ENCODE measurements at regions of chr1 and their contacts with region 1.

Region 1: GRCh38 chr1:16960560-16961296 is 19.7 kb downstream of the MFAP2 start:
- DNase-seq: peak; percentile 90
- H3K4me3 Mint-ChIP-seq: peak overlapping the region; percentile 74
- H3K27ac Mint-ChIP-seq: no peak overlapping the region
- H3K4me1 Mint-ChIP-seq: peaks cover 8% of the 10 kb centered on the region
- H3K27me3 Mint-ChIP-seq: no peaks in the 10 kb centered on the region

Region 2: GRCh38 chr1:16913833-16914662 is 46.7 kb before region 1 on chr1:
- CTCF ChIA-PET with region 1: interaction called, 3 read pairs
- intact Hi-C with region 1: loop called (anchors 2 kb)
- DNase-seq: peak; percentile 92
- H3K4me3 Mint-ChIP-seq: peak overlapping the region; percentile 88
- H3K27ac Mint-ChIP-seq: peak overlapping the region; percentile 77
- H3K4me1 Mint-ChIP-seq: peaks cover 30% of the 10 kb centered on the region
- H3K27me3 Mint-ChIP-seq: no peaks in the 10 kb centered on the region

Region 3: GRCh38 chr1:16921391-16922185 is 39.1 kb before region 1 on chr1 and contains the start of gene CROCC:
- CTCF ChIA-PET with region 1: interaction called, 11 read pairs
- intact Hi-C with region 1: no loop called
- DNase-seq: peak; percentile 76
- H3K4me3 Mint-ChIP-seq: peak within 1 kb of the TSS; percentile 65
- H3K27ac Mint-ChIP-seq: no peak within 1 kb of the TSS
- H3K4me1 Mint-ChIP-seq: peaks cover 18% of the 10 kb centered on the region
- H3K27me3 Mint-ChIP-seq: no peaks in the 10 kb centered on the region
- total RNA-seq, gene CROCC: 15.5 to 15.7 TPM

Region 4: DNA sequence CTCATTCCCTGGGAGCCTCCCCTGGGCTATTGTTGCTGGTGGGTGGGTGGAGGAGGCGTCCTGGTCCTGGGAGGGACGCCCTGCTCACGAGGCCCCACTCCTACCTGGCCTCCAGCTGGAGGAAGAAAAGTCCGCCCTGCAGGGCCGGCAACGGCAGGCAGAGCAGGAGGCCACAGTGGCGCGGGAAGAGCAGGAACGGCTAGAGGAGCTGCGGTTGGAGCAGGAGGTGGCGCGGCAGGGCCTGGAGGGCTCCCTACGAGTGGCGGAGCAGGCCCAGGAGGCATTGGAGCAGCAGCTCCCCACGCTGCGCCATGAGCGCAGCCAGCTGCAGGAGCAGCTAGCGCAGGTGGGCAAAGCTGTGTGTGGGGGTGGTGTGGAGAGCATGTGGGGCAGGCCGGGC is 14.1 kb before region 1 on chr1:
- CTCF ChIA-PET with region 1: interaction called, 22 read pairs
- intact Hi-C with region 1: no loop called
- DNase-seq: no peak
- H3K4me3 Mint-ChIP-seq: no peak overlapping the region
- H3K27ac Mint-ChIP-seq: no peak overlapping the region
- H3K4me1 Mint-ChIP-seq: no peaks in the 10 kb centered on the region
- H3K27me3 Mint-ChIP-seq: no peaks in the 10 kb centered on the region

Region 5: DNA sequence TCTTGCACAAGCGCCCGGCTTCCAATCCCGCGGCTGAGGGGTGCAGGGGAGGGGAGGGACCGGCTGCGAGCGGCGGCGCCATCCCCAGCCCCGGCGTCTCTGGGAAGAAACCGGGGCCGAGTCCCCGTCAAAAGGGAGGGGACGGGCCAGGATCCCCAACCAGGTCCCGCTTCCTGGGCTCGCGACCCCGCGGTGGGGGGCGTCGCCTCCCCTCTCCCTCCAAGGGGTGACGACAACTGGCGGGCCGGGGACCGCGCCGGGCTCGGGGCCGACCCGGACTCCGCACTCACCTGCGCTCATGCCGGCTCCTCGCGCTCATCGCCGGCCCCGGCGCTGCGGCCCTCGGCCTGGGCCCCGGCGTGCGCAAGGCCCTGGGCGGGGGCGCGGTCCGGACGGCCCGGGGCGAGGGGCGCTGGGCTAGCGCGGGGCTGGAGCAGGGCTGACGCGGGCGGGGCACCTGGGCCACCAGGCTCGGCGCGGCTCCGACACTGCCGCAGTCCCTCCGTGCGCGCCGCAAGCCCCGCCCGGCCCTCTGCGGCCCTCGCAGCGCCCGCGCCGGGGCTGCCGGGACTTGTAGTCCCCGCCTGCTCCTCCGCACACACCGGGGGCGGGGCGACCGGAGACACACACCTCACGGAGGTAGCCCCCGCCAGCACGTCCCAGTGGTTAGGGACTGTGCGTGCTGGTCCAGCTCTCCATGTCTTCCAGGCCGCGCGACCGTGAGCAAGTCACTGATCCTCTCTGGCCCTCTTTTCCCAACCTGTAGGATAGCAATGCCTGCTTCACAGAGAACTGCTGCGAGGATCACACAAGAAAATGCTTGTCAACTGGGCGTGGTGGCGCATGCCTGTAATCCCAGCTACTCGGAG is 50.9 kb after region 1 on chr1 and contains the start of gene ATP13A2:
- CTCF ChIA-PET with region 1: interaction called, 10 read pairs
- intact Hi-C with region 1: loop called (anchors 5 kb)
- DNase-seq: peak; percentile 77
- H3K4me3 Mint-ChIP-seq: peak within 1 kb of the TSS; percentile 81
- H3K27ac Mint-ChIP-seq: no peak within 1 kb of the TSS
- H3K4me1 Mint-ChIP-seq: peaks cover 17% of the 10 kb centered on the region
- H3K27me3 Mint-ChIP-seq: no peaks in the 10 kb centered on the region
- total RNA-seq, gene ATP13A2: 23.6 to 25.0 TPM

Region 6: GRCh38 chr1:17075470-17076255 is 114.9 kb after region 1 on chr1:
- CTCF ChIA-PET with region 1: no interaction called
- intact Hi-C with region 1: no loop called
- DNase-seq: no peak
- H3K4me3 Mint-ChIP-seq: no peak overlapping the region
- H3K27ac Mint-ChIP-seq: no peak overlapping the region
- H3K4me1 Mint-ChIP-seq: no peaks in the 10 kb centered on the region
- H3K27me3 Mint-ChIP-seq: no peaks in the 10 kb centered on the region

Region 7: DNA sequence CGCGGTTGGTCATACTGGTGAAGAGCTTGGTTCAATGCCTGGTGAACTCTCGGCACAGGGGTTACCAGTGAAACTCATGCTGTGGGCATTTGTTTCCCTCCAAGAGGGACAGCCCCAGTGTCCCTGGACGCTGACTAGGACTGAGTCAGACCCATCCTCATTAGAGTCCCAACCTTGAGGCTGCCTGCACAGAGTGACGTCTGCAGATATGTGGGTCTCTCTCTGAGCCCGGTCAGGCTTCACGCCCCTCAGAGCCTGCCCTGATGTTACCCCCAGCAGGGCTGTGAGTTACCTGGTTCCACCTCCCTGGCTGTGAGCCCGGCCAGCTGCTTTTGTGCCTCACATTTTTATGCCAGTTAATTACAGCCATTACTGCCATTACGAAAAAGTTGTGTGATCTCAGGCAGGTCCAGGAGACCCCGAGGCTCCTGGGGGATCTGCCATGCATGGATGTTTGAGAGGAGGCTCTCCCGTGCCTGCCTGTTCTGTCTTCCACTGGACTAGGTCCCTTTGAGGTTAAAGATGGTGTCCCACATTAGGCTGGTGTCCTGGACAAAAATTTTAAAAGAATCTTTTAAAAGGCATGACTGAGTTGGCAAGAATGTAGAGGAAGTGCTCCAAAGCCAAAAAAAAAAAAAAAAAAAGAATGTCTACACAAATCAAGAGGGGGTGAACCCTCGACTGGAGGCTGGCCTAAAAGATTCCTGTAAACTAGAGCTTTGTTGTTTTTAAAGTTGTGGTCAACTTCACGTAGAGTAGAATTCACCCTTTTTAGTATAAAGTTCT is 207.6 kb after region 1 on chr1:
- CTCF ChIA-PET with region 1: no interaction called
- intact Hi-C with region 1: no loop called
- DNase-seq: no peak
- H3K4me3 Mint-ChIP-seq: no peak overlapping the region
- H3K27ac Mint-ChIP-seq: no peak overlapping the region
- H3K4me1 Mint-ChIP-seq: no peaks in the 10 kb centered on the region
- H3K27me3 Mint-ChIP-seq: no peaks in the 10 kb centered on the region

Region 8: GRCh38 chr1:17212487-17213121 is 251.9 kb after region 1 on chr1:
- CTCF ChIA-PET with region 1: no interaction called
- intact Hi-C with region 1: no loop called
- DNase-seq: peak; percentile 69
- H3K4me3 Mint-ChIP-seq: no peak overlapping the region
- H3K27ac Mint-ChIP-seq: no peak overlapping the region
- H3K4me1 Mint-ChIP-seq: peaks cover 41% of the 10 kb centered on the region
- H3K27me3 Mint-ChIP-seq: peaks cover 19% of the 10 kb centered on the region

Region 9: GRCh38 chr1:17475729-17476128 is 515.0 kb after region 1 on chr1:
- CTCF ChIA-PET with region 1: no interaction called
- intact Hi-C with region 1: no loop called
- DNase-seq: peak; percentile 13
- H3K4me3 Mint-ChIP-seq: no peak overlapping the region
- H3K27ac Mint-ChIP-seq: no peak overlapping the region
- H3K4me1 Mint-ChIP-seq: no peaks in the 10 kb centered on the region
- H3K27me3 Mint-ChIP-seq: no peaks in the 10 kb centered on the region

Measured in activated naive CD4-positive, alpha-beta T cell treated with anti-CD3 and anti-CD28 coated beads for 36 hours (primary cell).